MCF 10A (cell line): ENCODE measurements at regions of chr3 and their contacts with region 1.

Region 1: GRCh38 chr3:52056968-52057805 is 816 bp upstream of the DUSP7 start:
- DNase-seq: peak; percentile 99
- H3K4me3 Mint-ChIP-seq: peak overlapping the region; percentile 81
- H3K27ac Mint-ChIP-seq: peak overlapping the region; percentile 50
- H3K4me1 Mint-ChIP-seq: peaks cover 42% of the 10 kb centered on the region
- H3K27me3 Mint-ChIP-seq: no peaks in the 10 kb centered on the region
- CTCF ChIP-seq: no peak

Region 2: DNA sequence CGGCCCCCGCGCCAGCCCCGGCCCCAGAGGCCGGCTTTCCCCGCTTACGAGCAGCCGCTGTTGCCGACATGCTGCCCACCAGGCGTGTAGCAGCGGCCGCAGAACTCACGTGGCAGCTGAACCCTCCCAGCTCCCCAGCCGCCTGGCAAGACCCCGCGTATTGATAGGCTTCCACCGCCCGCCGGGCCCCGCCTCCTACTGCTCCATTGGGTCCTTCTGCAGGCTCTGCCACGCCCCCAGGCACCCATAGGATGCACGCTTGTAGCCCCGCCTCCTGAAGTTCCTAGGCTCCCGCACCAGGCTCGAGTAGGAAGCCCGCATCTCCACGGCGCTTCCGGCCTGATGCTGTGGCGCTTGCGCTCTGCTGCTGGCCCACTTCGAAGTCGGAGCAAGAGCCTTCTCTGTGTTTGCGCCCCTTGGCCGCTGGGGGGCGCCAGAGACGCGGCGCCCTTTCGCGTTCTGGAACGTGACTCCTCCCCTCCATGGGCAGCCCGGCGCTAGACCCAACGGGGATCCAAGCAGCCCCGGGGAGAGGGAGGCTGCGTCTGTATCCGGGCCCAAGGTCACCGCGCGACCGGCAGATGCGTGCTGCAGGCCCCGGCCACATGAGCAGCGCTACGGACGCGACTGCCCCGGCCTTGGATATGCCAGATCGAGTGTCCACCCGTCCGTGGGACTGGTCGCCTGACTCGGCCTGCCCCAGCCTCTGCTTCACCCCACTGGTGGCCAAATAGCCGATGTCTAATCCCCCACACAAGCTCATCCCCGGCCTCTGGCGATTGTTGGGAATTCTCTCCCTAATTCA is 115.2 kb before region 1 on chr3 and contains the starts of genes PARP3 and RRP9:
- CTCF ChIA-PET with region 1: interaction called, 18 read pairs
- POLR2A ChIA-PET with region 1: interaction called, 30 read pairs
- intact Hi-C with region 1: loop called (anchors 1 kb)
- DNase-seq: peak; percentile 100
- H3K4me3 Mint-ChIP-seq: peak within 1 kb of the TSS; percentile 92
- H3K27ac Mint-ChIP-seq: peak within 1 kb of the TSS; percentile 95
- H3K4me1 Mint-ChIP-seq: peaks cover 16% of the 10 kb centered on the region
- H3K27me3 Mint-ChIP-seq: no peaks in the 10 kb centered on the region
- CTCF ChIP-seq: peak; percentile 96
- total RNA-seq, gene PARP3: 19.4 and 25.5 TPM in 2 replicates
- total RNA-seq, gene RRP9: 60.8 and 80.2 TPM in 2 replicates

Region 3: GRCh38 chr3:52001443-52001974 is 55.7 kb before region 1 on chr3:
- CTCF ChIA-PET with region 1: interaction called, 116 read pairs
- POLR2A ChIA-PET with region 1: interaction called, 34 read pairs
- intact Hi-C with region 1: loop called (anchors 1 kb)
- DNase-seq: peak; percentile 77
- H3K4me3 Mint-ChIP-seq: no peak overlapping the region
- H3K27ac Mint-ChIP-seq: no peak overlapping the region
- H3K4me1 Mint-ChIP-seq: peaks cover 8% of the 10 kb centered on the region
- H3K27me3 Mint-ChIP-seq: no peaks in the 10 kb centered on the region
- CTCF ChIP-seq: peak; percentile 97

Region 4: GRCh38 chr3:52046186-52046913 is 10.8 kb before region 1 on chr3:
- CTCF ChIA-PET with region 1: interaction called, 32 read pairs
- POLR2A ChIA-PET with region 1: interaction called, 101 read pairs
- intact Hi-C with region 1: no loop called
- DNase-seq: peak; percentile 99
- H3K4me3 Mint-ChIP-seq: peak overlapping the region; percentile 68
- H3K27ac Mint-ChIP-seq: peak overlapping the region; percentile 95
- H3K4me1 Mint-ChIP-seq: peaks cover 56% of the 10 kb centered on the region
- H3K27me3 Mint-ChIP-seq: no peaks in the 10 kb centered on the region
- CTCF ChIP-seq: no peak

Region 5: GRCh38 chr3:52136513-52136912 is 79.3 kb after region 1 on chr3:
- CTCF ChIA-PET with region 1: interaction called, 10 read pairs
- POLR2A ChIA-PET with region 1: interaction called, 3 read pairs
- intact Hi-C with region 1: no loop called
- DNase-seq: no peak
- H3K4me3 Mint-ChIP-seq: no peak overlapping the region
- H3K27ac Mint-ChIP-seq: no peak overlapping the region
- H3K4me1 Mint-ChIP-seq: no peaks in the 10 kb centered on the region
- H3K27me3 Mint-ChIP-seq: no peaks in the 10 kb centered on the region
- CTCF ChIP-seq: no peak

Region 6: DNA sequence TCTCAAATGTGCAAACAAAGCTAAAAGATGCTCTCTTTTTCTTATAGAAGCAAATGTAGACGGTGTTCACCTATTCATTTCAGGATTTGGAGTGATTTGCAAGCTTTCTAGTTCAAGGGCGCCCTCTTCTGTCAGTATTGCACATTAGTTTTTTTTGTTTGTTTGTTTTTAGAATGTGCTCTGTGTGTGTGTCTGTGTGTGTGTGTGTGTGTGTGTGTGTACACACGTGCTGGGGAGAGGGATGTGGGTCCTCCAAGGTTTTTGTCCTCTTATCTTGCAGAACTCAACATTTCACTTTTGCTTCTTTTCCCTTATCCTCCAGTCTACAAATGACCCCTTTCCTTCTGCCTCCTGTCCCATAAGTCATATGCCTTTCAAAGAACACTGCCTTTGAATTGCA is 282.4 kb after region 1 on chr3:
- CTCF ChIA-PET with region 1: interaction called, 5 read pairs
- POLR2A ChIA-PET with region 1: no interaction called
- intact Hi-C with region 1: loop called (anchors 2 kb)
- DNase-seq: peak; percentile 83
- H3K4me3 Mint-ChIP-seq: no peak overlapping the region
- H3K27ac Mint-ChIP-seq: no peak overlapping the region
- H3K4me1 Mint-ChIP-seq: peaks cover 6% of the 10 kb centered on the region
- H3K27me3 Mint-ChIP-seq: peaks cover 7% of the 10 kb centered on the region
- CTCF ChIP-seq: peak; percentile 62